Right ventricle myocardium inferior (tissue), 1 donor: ENCODE measurements at regions of chr1 and their contacts with region 1.

Region 1: GRCh38 chr1:168603501-168604110 is 27.2 kb downstream of the XCL1 start:
- DNase-seq: peak; percentile 81
- ATAC-seq: peak; percentile 88

Region 2: GRCh38 chr1:169193191-169193850 is 589.7 kb after region 1 on chr1:
- intact Hi-C with region 1: loop called (anchors 10 kb)
- DNase-seq: no peak
- ATAC-seq: peak; percentile 94

Region 3: GRCh38 chr1:169266133-169266532 is 662.5 kb after region 1 on chr1:
- intact Hi-C with region 1: loop called (anchors 5 kb)
- DNase-seq: no peak
- ATAC-seq: no peak

Region 4: GRCh38 chr1:169348383-169349036 is 744.9 kb after region 1 on chr1:
- intact Hi-C with region 1: loop called (anchors 2 kb)
- DNase-seq: no peak
- ATAC-seq: no peak

Region 5: GRCh38 chr1:169546087-169546995 is 942.7 kb after region 1 on chr1:
- intact Hi-C with region 1: loop called (anchors 10 kb)
- DNase-seq: no peak
- ATAC-seq: peak; percentile 73